Endothelial cell of umbilical vein (primary cell): ENCODE measurements at regions of chr11 and their contacts with region 1.

Region 1: GRCh38 chr11:65314501-65315203 is at the start of gene CDC42EP2:
- DNase-seq: peak; percentile 88
- H3K4me3 ChIP-seq: peak within 1 kb of the TSS; percentile 87 to 97 (median 90)
- H3K27ac ChIP-seq: peak within 1 kb of the TSS; percentile 84
- H3K4me1 ChIP-seq: peaks cover 31% of the 10 kb centered on the region
- H3K27me3 ChIP-seq: no peaks in the 10 kb centered on the region
- CTCF ChIP-seq: no peak
- POLR2A ChIP-seq: peak; percentile 98
- total RNA-seq, gene CDC42EP2: 23.4 and 23.9 TPM in 2 replicates

Region 2: GRCh38 chr11:65204646-65205601 is 109.7 kb before region 1 on chr11:
- CTCF ChIA-PET with region 1: interaction called, 15 read pairs
- POLR2A ChIA-PET with region 1: no interaction called
- dilution Hi-C with region 1: no loop called
- intact Hi-C with region 1: loop called (anchors 5 kb)
- DNase-seq: peak; percentile 40
- H3K4me3 ChIP-seq: no peak overlapping the region
- H3K27ac ChIP-seq: no peak overlapping the region
- H3K4me1 ChIP-seq: no peaks in the 10 kb centered on the region
- H3K27me3 ChIP-seq: no peaks in the 10 kb centered on the region
- CTCF ChIP-seq: peak; percentile 83 to 98
- POLR2A ChIP-seq: no peak

Region 3: GRCh38 chr11:65274735-65275682 is 39.6 kb before region 1 on chr11:
- CTCF ChIA-PET with region 1: interaction called, 625 read pairs
- POLR2A ChIA-PET with region 1: interaction called, 65 read pairs
- dilution Hi-C with region 1: no loop called
- intact Hi-C with region 1: loop called (anchors 1 kb)
- DNase-seq: peak; percentile 97
- H3K4me3 ChIP-seq: no peak overlapping the region
- H3K27ac ChIP-seq: peak overlapping the region; percentile 92
- H3K4me1 ChIP-seq: peaks cover 39% of the 10 kb centered on the region
- H3K27me3 ChIP-seq: no peaks in the 10 kb centered on the region
- CTCF ChIP-seq: peak; percentile 60 to 83
- POLR2A ChIP-seq: peak; percentile 48

Region 4: GRCh38 chr11:65298655-65299179 is 15.9 kb before region 1 on chr11:
- CTCF ChIA-PET with region 1: interaction called, 103 read pairs
- POLR2A ChIA-PET with region 1: no interaction called
- dilution Hi-C with region 1: no loop called
- intact Hi-C with region 1: no loop called
- DNase-seq: no peak
- H3K4me3 ChIP-seq: no peak overlapping the region
- H3K27ac ChIP-seq: no peak overlapping the region
- H3K4me1 ChIP-seq: no peaks in the 10 kb centered on the region
- H3K27me3 ChIP-seq: no peaks in the 10 kb centered on the region
- CTCF ChIP-seq: no peak
- POLR2A ChIP-seq: no peak